Tibial artery (tissue), 4 donors: ENCODE measurements at regions of chr5 and their contacts with region 1.

Region 1: GRCh38 chr5:109690975-109691574 is 1.3 kb downstream of the MAN2A1 start:
- DNase-seq: peak; percentile 84 to 91
- H3K4me3 ChIP-seq: peak overlapping the region; percentile 75 to 93
- H3K27ac ChIP-seq: peak overlapping the region; percentile 96 to 98
- H3K4me1 ChIP-seq: peaks cover 0 to 47% (median 36%) of the 10 kb centered on the region in 4 donors
- H3K27me3 ChIP-seq: no peaks in the 10 kb centered on the region
- CTCF ChIP-seq: peak; percentile 62 to 79

Region 2: DNA sequence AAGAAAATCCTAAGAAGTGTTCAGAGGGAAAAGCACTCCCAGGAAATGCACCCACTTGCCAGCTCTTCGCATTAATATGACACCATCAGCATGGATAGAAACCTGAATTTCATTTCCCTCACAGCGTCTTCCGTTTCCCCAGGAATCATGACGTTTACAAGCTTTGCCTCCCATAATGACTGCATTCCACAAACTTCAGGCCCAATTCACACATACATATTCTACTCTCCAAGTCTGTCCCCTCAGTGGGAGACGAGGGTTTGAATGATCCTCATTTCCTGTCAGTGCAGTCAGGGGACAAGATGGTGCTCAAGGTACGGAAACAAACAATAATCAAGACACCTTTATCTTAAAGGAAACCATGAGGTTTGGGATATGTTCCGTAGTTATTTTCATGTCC is 46.2 kb before region 1 on chr5:
- intact Hi-C with region 1: no loop called
- DNase-seq: no peak
- H3K4me3 ChIP-seq: no peak overlapping the region
- H3K27ac ChIP-seq: peak overlapping the region in 1 of 2 donors; percentile 48
- H3K4me1 ChIP-seq: peaks cover 0 to 22% (median 1%) of the 10 kb centered on the region in 4 donors
- H3K27me3 ChIP-seq: no peaks in the 10 kb centered on the region
- CTCF ChIP-seq: no peak

Region 3: DNA sequence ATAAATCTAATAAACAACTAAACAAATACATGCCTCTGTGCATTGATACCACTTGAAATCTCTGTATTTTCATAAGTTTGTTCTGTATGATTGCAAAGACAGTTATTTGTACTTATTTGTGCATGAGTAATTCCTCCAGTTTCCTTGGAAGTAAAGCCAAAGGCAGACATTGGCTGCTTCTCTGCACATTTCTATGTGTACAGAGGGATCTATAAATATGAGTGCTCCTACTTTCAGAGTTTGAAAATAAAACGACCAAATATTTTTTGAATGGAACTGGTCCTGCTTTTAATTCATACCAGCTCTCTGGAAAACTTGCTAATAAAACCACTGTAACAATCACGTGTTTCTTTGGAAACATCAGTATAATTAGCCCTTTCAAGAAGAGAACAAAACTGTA is 305.2 kb after region 1 on chr5:
- intact Hi-C with region 1: loop called (anchors 5 kb)
- DNase-seq: no peak
- H3K4me3 ChIP-seq: no peak overlapping the region
- H3K27ac ChIP-seq: peak overlapping the region; percentile 42 to 48
- H3K4me1 ChIP-seq: peaks cover 4 to 62% (median 37%) of the 10 kb centered on the region in 4 donors
- H3K27me3 ChIP-seq: no peaks in the 10 kb centered on the region
- CTCF ChIP-seq: no peak

Region 4: DNA sequence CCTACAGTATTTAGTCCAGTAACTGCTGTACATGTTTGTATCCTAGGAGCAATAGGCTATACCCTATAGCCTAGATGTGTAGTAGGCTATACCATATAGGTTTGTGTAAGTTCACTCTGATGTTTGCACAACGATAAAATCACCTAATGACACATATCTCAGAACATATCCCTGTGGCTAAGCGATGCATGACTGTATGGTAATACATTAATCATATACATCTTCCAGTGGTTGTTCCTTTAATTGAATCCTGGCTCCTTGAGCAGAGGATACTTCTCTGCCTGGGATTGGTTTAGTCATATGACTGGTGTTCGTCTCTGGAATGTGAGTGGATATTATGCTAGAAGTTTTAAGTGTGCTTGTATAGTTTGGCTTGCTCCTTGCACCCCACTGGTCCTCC is 424.4 kb after region 1 on chr5:
- intact Hi-C with region 1: loop called (anchors 10 kb)
- DNase-seq: no peak
- H3K4me3 ChIP-seq: no peak overlapping the region
- H3K27ac ChIP-seq: no peak overlapping the region
- H3K4me1 ChIP-seq: no peaks in the 10 kb centered on the region
- H3K27me3 ChIP-seq: no peaks in the 10 kb centered on the region
- CTCF ChIP-seq: no peak

Region 5: DNA sequence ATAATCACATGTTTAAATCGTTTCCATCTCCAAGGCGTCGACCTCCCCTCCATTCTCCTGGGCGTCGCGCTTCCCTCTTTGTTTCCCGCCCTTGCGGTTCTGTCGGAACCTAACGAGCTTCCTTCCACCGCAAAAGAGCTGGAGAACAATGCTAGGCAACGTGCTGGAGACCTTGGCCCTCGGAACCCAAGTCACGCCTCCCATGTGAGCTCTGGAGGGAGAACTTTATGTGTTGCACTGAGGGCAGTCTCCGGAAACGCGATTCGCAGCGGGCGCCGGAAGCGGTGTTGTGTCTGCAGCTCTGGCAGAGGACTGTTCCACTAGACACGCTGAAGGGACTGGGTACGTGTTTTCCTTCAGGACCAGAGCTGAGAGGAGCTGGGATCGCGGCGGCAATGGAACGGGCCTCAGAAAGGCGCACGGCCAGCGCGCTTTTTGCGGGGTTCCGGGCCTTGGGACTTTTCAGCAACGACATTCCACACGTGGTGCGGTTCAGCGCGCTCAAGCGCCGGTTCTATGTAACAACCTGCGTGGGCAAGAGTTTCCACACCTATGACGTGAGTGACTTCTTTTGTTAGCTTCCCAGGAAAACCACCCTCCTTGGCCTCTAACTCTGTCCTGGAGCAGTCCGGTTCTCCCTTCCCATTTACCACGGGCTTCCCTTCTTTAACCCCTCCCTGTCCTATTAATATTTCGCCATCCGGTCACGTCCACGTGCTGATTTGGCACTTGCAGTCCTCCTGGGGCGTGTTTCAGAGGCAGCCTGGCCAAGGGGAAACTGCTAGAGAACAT is 1401.2 kb after region 1 on chr5 and contains the start of gene WDR36:
- intact Hi-C with region 1: loop called (anchors 10 kb)
- DNase-seq: peak; percentile 88 to 90
- H3K4me3 ChIP-seq: peak within 1 kb of the TSS; percentile 71 to 92
- H3K27ac ChIP-seq: peak within 1 kb of the TSS; percentile 74 to 84
- H3K4me1 ChIP-seq: peaks cover 0 to 18% (median 12%) of the 10 kb centered on the region in 4 donors
- H3K27me3 ChIP-seq: no peaks in the 10 kb centered on the region
- CTCF ChIP-seq: peak in 1 of 2 experiments; percentile 14